GM10248 (cell line): ENCODE measurements at regions of chr1 and their contacts with region 1.

Region 1: GRCh38 chr1:111154021-111154999 is 14.3 kb downstream of the CEPT1 start:
- DNase-seq: no peak
- CTCF ChIP-seq: no peak

Region 2: DNA sequence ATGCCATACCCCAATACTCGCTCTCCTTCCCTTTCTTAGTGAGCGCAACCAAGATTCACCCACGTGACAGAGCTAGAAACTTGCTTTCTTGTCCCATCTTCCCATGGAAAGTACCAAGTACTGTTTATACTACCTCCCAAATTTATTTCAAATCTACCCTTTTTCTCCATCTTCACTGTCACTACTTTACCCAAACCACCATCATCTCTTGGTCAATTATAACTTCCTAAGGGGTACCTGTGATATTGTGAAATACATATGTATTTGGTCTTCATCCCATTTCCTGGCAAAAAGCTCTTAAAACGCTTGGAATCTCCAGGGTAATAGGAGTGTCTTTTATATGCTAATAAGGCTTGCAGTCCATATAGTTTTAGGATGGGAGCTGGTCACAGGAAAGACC is 22.6 kb before region 1 on chr1:
- CTCF ChIA-PET with region 1: no interaction called
- POLR2A ChIA-PET with region 1: no interaction called
- DNase-seq: no peak
- CTCF ChIP-seq: no peak

Region 3: DNA sequence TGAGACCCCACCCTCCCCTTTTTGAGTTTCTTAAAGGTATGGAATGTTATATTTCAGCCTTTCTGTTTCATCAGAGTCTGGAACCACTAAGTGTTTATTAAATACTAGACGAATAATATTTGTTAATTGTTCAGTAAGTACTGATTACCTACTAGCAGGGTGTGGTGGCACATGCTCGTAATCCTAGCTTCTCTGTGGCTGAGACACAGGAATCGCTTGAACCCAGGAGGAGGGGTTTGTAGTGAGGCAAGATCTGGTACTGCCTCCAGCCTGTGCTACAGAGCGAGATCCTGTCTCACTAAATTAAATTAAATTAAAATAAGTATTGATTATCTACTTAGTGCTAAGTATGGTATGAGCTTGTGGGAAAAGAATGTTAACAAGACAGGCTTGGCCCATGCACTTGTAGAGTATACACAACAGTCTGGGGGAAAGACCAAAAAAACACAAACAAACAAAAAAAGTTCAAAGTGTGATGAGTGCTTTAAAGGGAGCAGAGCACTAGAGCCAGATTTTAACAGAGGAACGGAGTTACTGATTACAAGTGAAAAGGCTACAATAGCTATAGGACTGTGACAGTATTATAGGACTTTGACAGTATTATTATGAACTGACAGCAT is 11.8 kb before region 1 on chr1:
- CTCF ChIA-PET with region 1: interaction called, 12 read pairs
- POLR2A ChIA-PET with region 1: no interaction called
- DNase-seq: no peak
- CTCF ChIP-seq: no peak